ENCODE measurements at regions of chr4 and their contacts with region 1.

Region 1: GRCh38 chr4:89434364-89434988 is 126.9 kb upstream of the GPRIN3 start:
- DNase-seq: no peak
- ATAC-seq: peak; percentile 54
- H3K4me3 Mint-ChIP-seq: no peak overlapping the region
- H3K27ac Mint-ChIP-seq: no peak overlapping the region
- H3K4me1 Mint-ChIP-seq: peaks cover 7% of the 10 kb centered on the region
- H3K27me3 Mint-ChIP-seq: no peaks in the 10 kb centered on the region
- CTCF ChIP-seq: no peak

Region 2: DNA sequence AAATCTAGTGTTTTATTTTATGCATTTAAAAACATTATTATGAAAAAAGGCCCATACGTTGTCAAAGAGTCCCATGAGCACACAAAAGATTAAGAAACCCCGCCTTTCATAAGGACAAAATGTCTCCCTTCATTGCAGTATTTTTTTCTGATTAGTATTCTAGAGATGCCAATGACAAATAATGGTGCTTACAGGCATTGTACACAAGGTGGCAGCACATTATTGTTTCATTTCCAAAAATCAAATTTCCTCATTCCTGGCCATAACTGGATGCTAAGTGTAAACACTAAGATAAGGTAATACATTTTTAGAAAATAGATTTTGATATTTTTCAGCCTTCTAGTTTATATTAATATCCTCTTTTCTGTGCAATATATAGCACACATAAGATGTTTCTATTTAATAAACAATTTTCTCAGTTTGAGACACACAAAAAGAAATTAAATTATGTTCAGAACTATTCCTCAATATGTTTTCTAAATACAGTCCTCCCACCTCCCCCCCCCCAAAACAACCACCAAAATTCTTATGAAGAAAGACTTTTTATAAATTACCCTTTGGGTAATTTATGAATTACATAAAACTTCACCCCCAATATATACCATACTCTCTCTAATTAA is 275.5 kb before region 1 on chr4:
- CTCF ChIA-PET with region 1: interaction called, 4 read pairs
- POLR2A ChIA-PET with region 1: no interaction called
- intact Hi-C with region 1: loop called (anchors 1 kb)
- DNase-seq: no peak
- ATAC-seq: peak; percentile 56
- H3K4me3 Mint-ChIP-seq: no peak overlapping the region
- H3K27ac Mint-ChIP-seq: no peak overlapping the region
- H3K4me1 Mint-ChIP-seq: no peaks in the 10 kb centered on the region
- H3K27me3 Mint-ChIP-seq: peaks cover 3% of the 10 kb centered on the region
- CTCF ChIP-seq: peak; percentile 55

Region 3: GRCh38 chr4:89226665-89227574 is 207.6 kb before region 1 on chr4:
- CTCF ChIA-PET with region 1: interaction called, 35 read pairs
- POLR2A ChIA-PET with region 1: interaction called, 3 read pairs
- intact Hi-C with region 1: loop called (anchors 1 kb)
- DNase-seq: peak; percentile 25
- ATAC-seq: peak; percentile 85
- H3K4me3 Mint-ChIP-seq: no peak overlapping the region
- H3K27ac Mint-ChIP-seq: no peak overlapping the region
- H3K4me1 Mint-ChIP-seq: peaks cover 4% of the 10 kb centered on the region
- H3K27me3 Mint-ChIP-seq: no peaks in the 10 kb centered on the region
- CTCF ChIP-seq: peak; percentile 20

Region 4: GRCh38 chr4:89254847-89255246 is 179.6 kb before region 1 on chr4:
- CTCF ChIA-PET with region 1: interaction called, 9 read pairs
- POLR2A ChIA-PET with region 1: no interaction called
- intact Hi-C with region 1: loop called (anchors 1 kb)
- DNase-seq: no peak
- ATAC-seq: peak; percentile 64
- H3K4me3 Mint-ChIP-seq: no peak overlapping the region
- H3K27ac Mint-ChIP-seq: no peak overlapping the region
- H3K4me1 Mint-ChIP-seq: no peaks in the 10 kb centered on the region
- H3K27me3 Mint-ChIP-seq: no peaks in the 10 kb centered on the region
- CTCF ChIP-seq: peak; percentile 88

Region 5: GRCh38 chr4:89307446-89308160 is 126.9 kb before region 1 on chr4 and contains the start of gene GPRIN3:
- CTCF ChIA-PET with region 1: no interaction called
- POLR2A ChIA-PET with region 1: no interaction called
- intact Hi-C with region 1: loop called (anchors 1 kb)
- DNase-seq: peak; percentile 59
- ATAC-seq: peak; percentile 93
- H3K4me3 Mint-ChIP-seq: peak within 1 kb of the TSS; percentile 88
- H3K27ac Mint-ChIP-seq: peak within 1 kb of the TSS; percentile 46
- H3K4me1 Mint-ChIP-seq: peaks cover 30% of the 10 kb centered on the region
- H3K27me3 Mint-ChIP-seq: peaks cover 10% of the 10 kb centered on the region
- CTCF ChIP-seq: no peak
- total RNA-seq, gene GPRIN3: 1.8 and 1.9 TPM in 2 replicates

Region 6: DNA sequence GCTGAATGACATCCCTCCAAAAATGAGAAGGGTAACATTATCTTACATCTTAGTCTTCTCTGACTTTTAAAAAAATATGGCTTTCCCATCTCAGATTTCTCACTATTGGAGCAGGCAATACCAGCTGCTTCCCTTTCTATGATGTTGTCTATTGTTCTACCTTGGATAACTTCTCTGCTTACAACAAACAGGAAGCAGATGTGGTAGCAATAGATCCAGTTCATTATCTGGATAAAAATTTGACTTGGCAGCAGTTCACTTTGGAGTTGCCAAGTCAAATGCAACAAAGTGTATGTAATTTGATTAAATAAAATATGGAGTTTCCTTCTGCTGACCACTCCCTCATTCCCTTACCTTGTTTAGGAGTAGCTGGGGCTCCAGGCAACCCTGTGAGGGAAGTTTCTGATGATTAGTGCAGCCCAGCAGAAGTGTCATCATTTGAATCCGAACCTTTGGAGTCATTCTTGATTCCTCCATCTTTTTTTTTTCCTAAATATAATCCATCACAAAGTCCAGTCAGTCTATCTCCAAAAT is 54.9 kb before region 1 on chr4:
- CTCF ChIA-PET with region 1: no interaction called
- POLR2A ChIA-PET with region 1: no interaction called
- intact Hi-C with region 1: no loop called
- DNase-seq: no peak
- ATAC-seq: no peak
- H3K4me3 Mint-ChIP-seq: no peak overlapping the region
- H3K27ac Mint-ChIP-seq: no peak overlapping the region
- H3K4me1 Mint-ChIP-seq: no peaks in the 10 kb centered on the region
- H3K27me3 Mint-ChIP-seq: peaks cover 8% of the 10 kb centered on the region
- CTCF ChIP-seq: no peak

Measured in activated B cell treated with CpG ODN at 0.5 μM for 24 hours (primary cell).